ENCODE measurements at regions of chr3 and their contacts with region 1.

Region 1: GRCh38 chr3:112642912-112643506 is 2.1 kb upstream of the CCDC80 start:
- DNase-seq: peak; percentile 55 to 76 (median 66)
- ATAC-seq: peak; percentile 76 to 89 (median 88)
- H3K4me3 ChIP-seq: no peak overlapping the region
- H3K27ac ChIP-seq: no peak overlapping the region
- H3K4me1 ChIP-seq: peaks cover 0 to 6% (median 0%) of the 10 kb centered on the region in 3 donors
- H3K27me3 ChIP-seq: no peaks in the 10 kb centered on the region
- CTCF ChIP-seq: peak in 3 of 4 donors; percentile 40 to 52 (median 44)

Region 2: GRCh38 chr3:112979240-112979832 is 336.3 kb after region 1 on chr3:
- intact Hi-C with region 1: loop called in 2 of 3 experiments (anchors 10 kb)
- DNase-seq: no peak
- ATAC-seq: peak in 3 of 4 donors; percentile 40 to 62 (median 48)
- H3K4me3 ChIP-seq: no peak overlapping the region
- H3K27ac ChIP-seq: no peak overlapping the region
- H3K4me1 ChIP-seq: peaks cover 0 to 4% (median 0%) of the 10 kb centered on the region in 3 donors
- H3K27me3 ChIP-seq: no peaks in the 10 kb centered on the region
- CTCF ChIP-seq: peak; percentile 16 to 64 (median 46)

Region 3: GRCh38 chr3:112984485-112984884 is 341.5 kb after region 1 on chr3:
- intact Hi-C with region 1: loop called in 2 of 3 experiments (anchors 10 kb)
- DNase-seq: no peak
- ATAC-seq: no peak
- H3K4me3 ChIP-seq: no peak overlapping the region
- H3K27ac ChIP-seq: no peak overlapping the region
- H3K4me1 ChIP-seq: peaks cover 0 to 3% (median 0%) of the 10 kb centered on the region in 3 donors
- H3K27me3 ChIP-seq: no peaks in the 10 kb centered on the region
- CTCF ChIP-seq: no peak

Measured in pancreas (tissue), 10 donors.